ENCODE measurements at regions of chr12 and their contacts with region 1.

Region 1: GRCh38 chr12:117587631-117588287 is 226.3 kb upstream of the NOS1 start:
- DNase-seq: no peak
- ATAC-seq: peak; percentile 82
- H3K4me3 ChIP-seq: no peak overlapping the region
- H3K27ac ChIP-seq: no peak overlapping the region
- H3K4me1 ChIP-seq: no peaks in the 10 kb centered on the region
- H3K27me3 ChIP-seq: peaks cover 0 to 2% of the 10 kb centered on the region in 2 experiments; a peak in 2 of 4 replicates
- CTCF ChIP-seq: peak; percentile 84 to 91 (median 86)
- EP300 ChIP-seq: no peak
- POLR2A ChIP-seq: no peak
- RAD21 ChIP-seq: peak; percentile 61

Region 2: GRCh38 chr12:117472983-117473382 is 114.8 kb before region 1 on chr12:
- CTCF ChIA-PET with region 1: no interaction called
- POLR2A ChIA-PET with region 1: no interaction called
- RAD21 ChIA-PET with region 1: no interaction called
- SMC1A ChIA-PET with region 1: no interaction called
- in situ Hi-C with region 1: no loop called
- intact Hi-C with region 1: no loop called
- DNase-seq: no peak
- ATAC-seq: no peak
- H3K4me3 ChIP-seq: no peak overlapping the region
- H3K27ac ChIP-seq: no peak overlapping the region
- H3K4me1 ChIP-seq: no peaks in the 10 kb centered on the region
- H3K27me3 ChIP-seq: no peaks in the 10 kb centered on the region; a peak in 1 of 4 replicates
- CTCF ChIP-seq: peak in 2 of 3 experiments; percentile 32 to 33; a peak in 2 of 6 replicates
- EP300 ChIP-seq: no peak
- POLR2A ChIP-seq: no peak
- RAD21 ChIP-seq: no peak

Region 3: DNA sequence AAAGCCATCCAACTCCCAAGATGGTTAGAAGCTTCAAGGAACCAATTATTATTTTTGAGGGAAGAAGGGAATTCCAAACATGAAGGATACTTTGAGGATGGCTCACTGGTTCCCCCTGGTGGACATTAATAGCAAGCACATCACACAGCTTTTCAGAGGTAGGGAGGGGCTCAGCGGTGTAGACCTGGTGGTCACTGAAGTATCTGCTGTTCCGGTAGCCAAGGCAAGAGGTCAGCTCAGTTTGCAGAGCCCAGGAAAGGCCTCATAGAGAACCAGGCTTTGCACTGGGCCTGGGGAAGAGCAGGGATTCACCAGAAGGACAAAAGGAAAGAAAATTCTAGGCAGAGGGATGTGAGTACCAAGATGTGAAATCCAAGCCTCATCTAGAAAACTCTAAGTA is 262.3 kb after region 1 on chr12:
- CTCF ChIA-PET with region 1: interaction called, 13 read pairs
- POLR2A ChIA-PET with region 1: no interaction called
- RAD21 ChIA-PET with region 1: no interaction called
- SMC1A ChIA-PET with region 1: interaction called, 6 read pairs
- in situ Hi-C with region 1: no loop called
- intact Hi-C with region 1: no loop called
- DNase-seq: no peak
- ATAC-seq: peak; percentile 65
- H3K4me3 ChIP-seq: no peak overlapping the region
- H3K27ac ChIP-seq: no peak overlapping the region
- H3K4me1 ChIP-seq: peaks cover 6% of the 10 kb centered on the region; the same call in 1 of the 2 replicates
- H3K27me3 ChIP-seq: no peaks in the 10 kb centered on the region
- CTCF ChIP-seq: peak; percentile 67 to 94 (median 82)
- EP300 ChIP-seq: no peak
- POLR2A ChIP-seq: no peak
- RAD21 ChIP-seq: peak; percentile 46